ENCODE measurements at regions of chr3 and their contacts with region 1.

Region 1: DNA sequence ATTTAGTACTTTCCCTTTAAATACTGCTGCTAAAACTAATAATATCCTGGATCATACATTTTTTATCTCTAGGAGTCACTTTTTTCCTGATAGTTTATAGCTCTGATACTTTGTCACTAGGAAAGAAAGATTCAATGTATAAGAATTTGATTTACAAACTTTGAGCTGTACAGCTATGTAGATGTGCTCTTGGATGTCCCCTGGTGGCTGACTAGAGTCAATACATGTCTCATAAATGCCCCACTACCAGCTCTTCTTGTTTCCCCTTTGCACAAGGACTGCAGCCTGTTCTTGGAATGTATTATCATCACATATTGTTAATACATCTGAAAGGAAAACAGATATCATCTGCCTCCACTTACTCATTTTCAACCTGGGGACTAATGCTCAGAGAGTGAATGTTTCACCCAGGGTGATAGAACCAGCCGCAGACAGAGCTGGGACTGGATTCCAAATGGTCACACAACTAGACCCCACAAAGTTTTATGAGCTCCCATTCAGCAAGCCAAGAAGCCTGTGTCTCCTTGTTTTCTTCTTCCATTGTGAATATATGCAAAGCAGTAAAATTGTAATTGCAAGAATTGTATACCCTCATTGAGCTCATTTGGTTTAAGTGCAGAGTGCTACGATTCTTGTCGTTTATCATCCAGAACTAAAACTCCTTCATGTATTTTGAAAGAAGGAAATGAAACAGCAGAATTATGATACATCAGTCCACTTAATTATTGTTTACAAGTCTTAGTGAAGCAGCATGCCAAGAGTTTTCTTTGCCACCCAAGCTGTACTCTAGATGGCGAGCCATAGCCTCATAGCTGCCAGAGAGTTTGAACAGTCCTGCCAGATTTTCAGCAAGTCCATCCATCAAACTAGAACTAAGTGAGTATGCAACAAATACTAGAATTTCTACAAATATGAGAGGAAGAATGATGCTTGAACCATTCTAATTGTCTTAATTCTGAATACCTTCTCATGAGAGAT is 261.6 kb upstream of the LMCD1 start:
- DNase-seq: peak in 1 of 2 experiments; percentile 49
- H3K4me3 ChIP-seq: no peak overlapping the region
- H3K27ac ChIP-seq: no peak overlapping the region
- H3K4me1 ChIP-seq: no peaks in the 10 kb centered on the region; a peak in 1 of 7 replicates
- H3K27me3 ChIP-seq: no peaks in the 10 kb centered on the region
- CTCF ChIP-seq: peak in 2 of 3 experiments; percentile 60 to 70; a peak in 3 of 4 replicates
- EP300 ChIP-seq: no peak
- POLR2A ChIP-seq: no peak
- RAD21 ChIP-seq: peak; percentile 64 to 71

Region 2: GRCh38 chr3:8077126-8077525 is 162.9 kb before region 1 on chr3:
- CTCF ChIA-PET with region 1: no interaction called
- POLR2A ChIA-PET with region 1: no interaction called
- DNase-seq: no peak
- H3K4me3 ChIP-seq: no peak overlapping the region
- H3K27ac ChIP-seq: no peak overlapping the region
- H3K4me1 ChIP-seq: no peaks in the 10 kb centered on the region
- H3K27me3 ChIP-seq: no peaks in the 10 kb centered on the region
- CTCF ChIP-seq: no peak
- EP300 ChIP-seq: no peak
- POLR2A ChIP-seq: no peak
- RAD21 ChIP-seq: no peak

Region 3: DNA sequence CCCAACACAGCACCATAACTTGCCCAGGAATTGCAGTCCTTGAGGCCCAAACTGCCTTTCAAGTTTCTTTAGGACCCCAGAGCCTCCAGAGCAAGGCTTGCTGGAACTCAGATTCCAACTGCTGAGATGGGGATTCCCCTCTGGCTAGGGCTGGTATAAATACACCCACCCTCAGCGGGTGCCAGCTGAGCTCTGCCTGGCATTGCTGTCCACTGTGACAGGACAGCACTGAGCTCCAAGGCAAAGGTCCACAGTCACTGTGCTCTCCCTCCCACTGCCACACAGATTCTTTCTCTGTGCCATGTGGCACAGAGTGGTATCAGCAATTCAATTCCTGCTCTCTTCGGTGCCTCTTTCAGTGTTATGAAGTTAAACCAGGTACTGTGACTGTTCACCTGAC is 42.6 kb before region 1 on chr3:
- CTCF ChIA-PET with region 1: no interaction called
- POLR2A ChIA-PET with region 1: no interaction called
- DNase-seq: no peak
- H3K4me3 ChIP-seq: no peak overlapping the region
- H3K27ac ChIP-seq: no peak overlapping the region
- H3K4me1 ChIP-seq: no peaks in the 10 kb centered on the region; a peak in 1 of 7 replicates
- H3K27me3 ChIP-seq: no peaks in the 10 kb centered on the region
- CTCF ChIP-seq: no peak
- EP300 ChIP-seq: no peak
- POLR2A ChIP-seq: no peak
- RAD21 ChIP-seq: no peak

Region 4: GRCh38 chr3:8223766-8224165 is 16.2 kb before region 1 on chr3:
- CTCF ChIA-PET with region 1: interaction called, 99 read pairs
- POLR2A ChIA-PET with region 1: no interaction called
- DNase-seq: no peak
- H3K4me3 ChIP-seq: no peak overlapping the region
- H3K27ac ChIP-seq: no peak overlapping the region
- H3K4me1 ChIP-seq: no peaks in the 10 kb centered on the region
- H3K27me3 ChIP-seq: no peaks in the 10 kb centered on the region
- CTCF ChIP-seq: no peak
- EP300 ChIP-seq: no peak
- POLR2A ChIP-seq: no peak
- RAD21 ChIP-seq: no peak

Region 5: DNA sequence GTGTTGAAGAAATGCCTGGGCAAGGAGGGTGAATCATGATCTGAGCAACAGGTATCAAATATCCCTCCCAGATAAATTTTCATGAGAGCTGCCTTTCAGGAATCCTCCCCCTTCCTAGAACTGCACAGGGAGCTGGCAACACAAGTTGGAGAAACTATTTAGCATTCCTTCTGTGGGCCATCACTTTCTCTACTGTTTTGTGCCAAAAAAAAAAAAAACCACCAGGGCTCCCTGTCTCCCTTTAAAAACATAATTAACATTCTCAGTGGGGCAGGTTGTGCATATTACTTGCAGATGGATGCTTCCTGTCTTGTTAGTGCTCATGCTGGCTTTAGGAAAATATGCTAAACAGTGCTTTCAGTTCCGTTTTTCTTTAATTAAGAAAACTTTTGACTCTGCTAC is 26.7 kb after region 1 on chr3:
- CTCF ChIA-PET with region 1: interaction called, 12 read pairs
- POLR2A ChIA-PET with region 1: no interaction called
- DNase-seq: no peak
- H3K4me3 ChIP-seq: peak overlapping the region in 1 of 4 experiments; percentile 10; a peak in 1 of 8 replicates
- H3K27ac ChIP-seq: no peak overlapping the region
- H3K4me1 ChIP-seq: peaks cover 0 to 5% (median 0%) of the 10 kb centered on the region in 4 experiments; a peak in 2 of 7 replicates
- H3K27me3 ChIP-seq: no peaks in the 10 kb centered on the region
- CTCF ChIP-seq: no peak
- EP300 ChIP-seq: no peak
- POLR2A ChIP-seq: no peak
- RAD21 ChIP-seq: no peak

Region 6: DNA sequence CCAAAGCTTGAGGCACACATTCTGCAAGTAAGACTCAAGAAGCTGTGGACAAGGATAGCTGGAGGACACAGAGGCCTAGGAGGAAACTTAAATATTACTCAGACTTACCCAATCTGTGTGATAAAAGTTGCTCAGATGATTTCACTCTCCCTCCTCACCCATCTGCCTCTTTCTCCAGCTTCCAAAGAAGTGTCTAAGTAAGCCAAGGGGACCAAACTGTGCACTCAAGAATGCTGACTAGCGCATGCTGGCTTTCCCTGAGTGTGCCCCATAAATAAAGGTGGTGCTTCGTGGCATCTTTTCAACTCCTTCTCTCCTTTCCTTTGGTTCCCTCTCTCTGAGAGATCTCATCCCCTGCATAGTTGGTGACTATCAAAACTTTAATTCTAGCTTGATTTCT is 50.6 kb after region 1 on chr3:
- CTCF ChIA-PET with region 1: interaction called, 10 read pairs
- POLR2A ChIA-PET with region 1: no interaction called
- DNase-seq: no peak
- H3K4me3 ChIP-seq: no peak overlapping the region
- H3K27ac ChIP-seq: no peak overlapping the region
- H3K4me1 ChIP-seq: peaks cover 0 to 4% (median 0%) of the 10 kb centered on the region in 4 experiments; a peak in 1 of 7 replicates
- H3K27me3 ChIP-seq: no peaks in the 10 kb centered on the region
- CTCF ChIP-seq: no peak
- EP300 ChIP-seq: no peak
- POLR2A ChIP-seq: no peak
- RAD21 ChIP-seq: no peak

Region 7: DNA sequence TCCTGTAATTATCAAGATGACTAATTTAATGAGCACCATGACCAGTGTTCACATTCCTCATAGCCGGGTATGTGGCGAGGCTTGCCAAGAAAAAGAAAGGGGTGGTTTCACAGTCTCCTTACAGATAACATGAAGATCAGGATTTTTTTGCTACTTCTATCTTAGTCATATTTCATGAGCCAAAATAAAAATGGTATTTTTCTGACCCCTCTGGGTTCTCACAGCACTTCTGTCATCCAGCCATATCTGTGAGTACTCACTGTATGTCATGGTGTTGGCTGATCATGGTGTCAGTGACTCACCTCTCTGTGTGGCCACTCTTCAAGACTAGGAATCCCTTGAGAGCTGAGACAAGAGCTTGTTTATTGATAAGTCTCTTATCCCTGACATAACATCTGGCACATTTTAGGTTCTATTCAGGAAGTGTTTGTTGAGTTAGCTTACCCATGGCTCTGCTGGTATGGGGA is 131.1 kb after region 1 on chr3:
- CTCF ChIA-PET with region 1: no interaction called
- POLR2A ChIA-PET with region 1: no interaction called
- DNase-seq: no peak
- H3K4me3 ChIP-seq: no peak overlapping the region
- H3K27ac ChIP-seq: no peak overlapping the region
- H3K4me1 ChIP-seq: 0 out of 7 replicates have a peak, but pooled peaks cover 0 to 4% (median 0%) of the 10 kb centered on the region in 4 experiments
- H3K27me3 ChIP-seq: no peaks in the 10 kb centered on the region
- CTCF ChIP-seq: no peak
- EP300 ChIP-seq: no peak
- POLR2A ChIP-seq: no peak
- RAD21 ChIP-seq: no peak

Region 8: DNA sequence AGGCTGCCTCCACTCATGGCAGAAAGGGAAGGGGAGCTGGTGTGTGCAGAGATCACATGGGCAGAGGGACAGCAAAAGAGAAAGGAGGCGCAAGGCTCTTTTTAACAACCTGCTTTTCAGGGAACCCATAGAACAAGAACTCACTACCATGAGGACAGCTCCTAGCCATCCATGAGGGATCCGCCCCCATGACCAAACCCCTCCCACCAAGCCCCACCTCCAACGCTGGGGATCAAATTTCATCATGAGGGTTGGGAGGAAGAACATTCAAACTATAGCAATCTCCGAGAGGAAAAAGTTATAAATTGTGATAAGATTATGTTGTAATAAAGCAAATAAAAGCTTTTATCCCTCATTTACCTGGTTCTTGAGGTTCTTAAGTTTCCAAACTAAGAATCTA is 177.0 kb after region 1 on chr3:
- CTCF ChIA-PET with region 1: interaction called, 13 read pairs
- POLR2A ChIA-PET with region 1: no interaction called
- DNase-seq: peak in 1 of 2 experiments; percentile 50
- H3K4me3 ChIP-seq: no peak overlapping the region
- H3K27ac ChIP-seq: no peak overlapping the region
- H3K4me1 ChIP-seq: no peaks in the 10 kb centered on the region
- H3K27me3 ChIP-seq: no peaks in the 10 kb centered on the region
- CTCF ChIP-seq: no peak
- EP300 ChIP-seq: no peak
- POLR2A ChIP-seq: no peak
- RAD21 ChIP-seq: no peak

Region 9: DNA sequence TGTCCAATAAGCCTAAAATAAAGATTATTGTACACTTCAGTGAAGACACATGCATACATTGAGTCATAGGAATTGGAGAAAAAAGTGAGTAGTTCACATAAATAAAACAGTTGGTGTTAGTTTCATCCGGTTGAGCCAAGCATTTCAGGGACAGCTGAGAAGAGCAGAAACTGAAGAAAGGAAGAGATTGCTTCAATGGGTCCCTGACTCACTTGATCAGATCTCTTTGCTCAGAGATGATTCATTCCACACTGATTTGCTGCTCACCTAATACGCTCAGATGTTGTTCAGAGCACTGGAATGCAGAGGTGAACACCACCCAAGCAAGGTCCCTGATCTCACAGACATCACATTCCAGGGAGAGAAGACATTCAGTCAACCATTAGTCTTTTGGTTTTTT is 629.6 kb after region 1 on chr3:
- CTCF ChIA-PET with region 1: no interaction called
- POLR2A ChIA-PET with region 1: no interaction called
- DNase-seq: no peak
- H3K4me3 ChIP-seq: no peak overlapping the region
- H3K27ac ChIP-seq: no peak overlapping the region
- H3K4me1 ChIP-seq: peaks cover 0 to 2% (median 0%) of the 10 kb centered on the region in 4 experiments; a peak in 3 of 7 replicates
- H3K27me3 ChIP-seq: no peaks in the 10 kb centered on the region
- CTCF ChIP-seq: no peak
- EP300 ChIP-seq: no peak
- POLR2A ChIP-seq: no peak
- RAD21 ChIP-seq: no peak

Measured in H1 (cell line).